ENCODE measurements at regions of chr1 and their contacts with region 1.

Region 1: DNA sequence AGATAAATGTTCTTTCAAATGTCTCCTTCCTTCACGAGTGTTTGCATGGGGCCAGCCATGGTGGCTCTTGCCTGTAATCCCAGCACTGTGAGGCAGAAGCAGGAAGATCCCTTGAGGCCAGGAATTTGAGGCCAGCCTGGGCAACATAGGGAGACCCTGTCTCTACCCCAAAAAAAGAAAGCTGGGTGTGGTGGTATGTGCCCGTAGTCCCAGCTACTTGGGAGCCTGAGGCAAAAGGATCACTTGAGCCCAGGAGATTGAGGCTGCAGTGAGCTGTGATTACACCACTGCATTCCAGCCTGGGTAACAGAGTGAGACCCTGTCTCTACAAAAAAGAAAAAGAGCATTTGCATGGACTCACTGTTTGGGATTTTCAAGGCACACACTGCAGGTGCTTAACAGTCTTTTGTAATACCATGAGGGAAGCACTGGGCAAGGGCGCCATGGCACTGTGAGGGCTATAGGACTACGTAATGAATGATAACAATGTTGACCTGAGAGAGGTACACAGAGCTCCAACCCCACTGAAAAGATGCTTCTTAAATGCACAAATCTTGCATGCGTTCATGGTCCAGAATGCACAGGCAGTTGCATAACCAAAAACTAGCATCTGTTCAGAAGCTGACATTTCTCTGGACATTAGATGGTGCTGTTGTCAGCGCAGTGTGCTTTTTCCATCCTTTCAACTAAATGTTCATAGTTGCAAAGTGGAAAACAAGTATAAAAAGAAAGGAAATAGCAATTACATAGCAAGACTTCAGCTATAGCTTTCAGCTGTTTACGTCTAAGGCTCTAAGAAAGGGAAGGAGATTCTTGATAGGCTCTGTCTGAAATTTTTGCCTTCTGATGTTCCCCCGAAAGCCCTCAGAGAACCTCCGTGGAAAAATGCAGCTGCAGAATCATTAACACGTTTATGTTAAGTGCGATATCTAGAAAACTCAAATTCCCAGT is 7.8 kb upstream of the TARBP1 start:
- DNase-seq: no peak
- H3K4me3 Mint-ChIP-seq: peak overlapping the region; percentile 28
- H3K27ac Mint-ChIP-seq: peak overlapping the region; percentile 94
- H3K4me1 Mint-ChIP-seq: peaks cover 42% of the 10 kb centered on the region
- H3K27me3 Mint-ChIP-seq: peaks cover 16% of the 10 kb centered on the region

Region 2: DNA sequence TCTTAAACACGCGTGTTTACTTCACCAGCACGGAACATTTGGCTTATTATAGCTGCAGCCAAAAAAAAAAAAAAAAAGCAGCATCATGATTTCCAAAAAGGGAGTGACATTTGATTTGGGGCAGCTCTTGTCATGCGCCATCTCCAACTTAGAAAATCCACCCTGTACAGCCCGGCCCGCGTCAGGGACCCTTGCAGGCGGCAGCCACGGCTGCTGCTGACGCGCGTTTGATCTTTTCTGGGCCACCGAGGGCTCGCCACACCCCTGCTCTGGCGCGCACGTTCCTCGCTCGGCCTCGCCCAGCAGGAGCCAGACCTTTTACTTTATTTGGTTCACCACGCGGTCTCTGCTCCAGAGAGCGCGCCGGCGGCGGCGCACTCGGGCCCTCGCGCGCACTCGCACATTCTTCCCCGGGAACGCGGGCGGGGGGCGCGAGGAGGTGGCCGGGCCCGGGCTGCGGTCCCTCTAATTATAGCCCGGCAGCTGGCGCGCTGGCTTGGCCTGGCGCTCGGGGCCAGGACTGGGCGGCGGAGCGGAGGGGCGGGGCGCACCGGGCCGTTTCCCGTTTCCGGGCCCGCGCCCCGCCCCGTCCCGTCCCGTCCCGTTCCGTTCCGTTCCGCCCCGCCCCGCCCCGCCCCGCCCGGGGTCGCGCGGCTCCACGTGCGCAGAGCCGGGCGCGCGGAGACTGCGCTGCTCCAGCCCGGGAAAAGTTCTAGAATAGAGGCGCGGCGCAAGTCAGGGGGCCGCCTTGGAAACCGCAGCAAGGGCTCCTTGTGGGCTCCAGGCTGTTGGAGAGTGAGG is 113.0 kb after region 1 on chr1:
- intact Hi-C with region 1: loop called (anchors 2 kb)
- DNase-seq: peak; percentile 70
- H3K4me3 Mint-ChIP-seq: peak overlapping the region; percentile 82
- H3K27ac Mint-ChIP-seq: peak overlapping the region; percentile 92
- H3K4me1 Mint-ChIP-seq: peaks cover 53% of the 10 kb centered on the region
- H3K27me3 Mint-ChIP-seq: no peaks in the 10 kb centered on the region

Region 3: GRCh38 chr1:234978397-234979295 is 491.9 kb after region 1 on chr1:
- intact Hi-C with region 1: loop called (anchors 5 kb)
- DNase-seq: no peak
- H3K4me3 Mint-ChIP-seq: peak overlapping the region; percentile 91
- H3K27ac Mint-ChIP-seq: peak overlapping the region; percentile 97
- H3K4me1 Mint-ChIP-seq: peaks cover 82% of the 10 kb centered on the region
- H3K27me3 Mint-ChIP-seq: no peaks in the 10 kb centered on the region

Region 4: DNA sequence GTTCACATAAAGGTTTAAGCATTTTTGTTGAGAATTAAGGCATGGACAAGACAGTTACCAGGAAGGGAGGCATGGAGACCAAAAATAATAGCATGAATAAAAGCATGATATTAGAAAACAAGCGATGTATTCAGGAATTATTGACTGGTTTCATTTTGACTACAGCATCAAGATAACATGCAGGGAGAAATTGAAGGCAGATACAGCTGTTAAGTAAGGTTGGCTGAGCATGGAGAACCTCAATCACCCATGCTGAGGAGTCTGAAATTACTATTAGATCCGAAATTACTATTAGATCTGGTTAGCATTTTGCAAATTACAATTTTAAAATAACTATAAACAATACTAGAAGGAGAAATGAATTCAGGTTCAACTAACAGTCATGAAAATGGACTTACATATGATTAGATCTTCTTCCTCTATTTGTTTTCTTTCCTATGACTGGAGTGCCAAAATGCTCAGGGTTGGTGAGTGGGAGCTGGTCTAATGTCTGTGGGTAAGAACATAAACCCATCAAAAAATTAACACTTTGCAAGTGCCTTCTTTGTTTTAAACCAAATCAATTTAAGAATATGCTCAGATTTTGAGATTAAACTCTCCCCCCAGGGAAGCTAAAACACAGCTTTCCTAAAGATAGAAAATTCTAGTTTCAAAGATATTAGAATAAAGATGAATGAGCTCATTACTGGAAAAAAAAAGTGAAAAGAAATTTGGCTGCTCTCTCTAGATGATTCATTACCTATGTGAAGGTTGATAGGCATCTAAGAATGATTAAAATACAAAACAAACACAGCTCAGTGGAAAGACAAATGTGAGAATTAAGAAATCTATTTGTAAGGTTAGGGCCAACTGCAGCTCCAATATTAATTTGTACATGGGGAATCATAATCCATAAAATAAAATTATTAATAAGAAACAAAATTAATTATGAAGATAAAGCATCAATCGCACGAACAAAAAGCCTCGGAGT is 759.5 kb after region 1 on chr1:
- intact Hi-C with region 1: loop called (anchors 10 kb)
- DNase-seq: no peak
- H3K4me3 Mint-ChIP-seq: peak overlapping the region; percentile 62
- H3K27ac Mint-ChIP-seq: peak overlapping the region; percentile 80
- H3K4me1 Mint-ChIP-seq: peaks cover 50% of the 10 kb centered on the region
- H3K27me3 Mint-ChIP-seq: no peaks in the 10 kb centered on the region

Region 5: GRCh38 chr1:235504496-235505222 is 1017.9 kb after region 1 on chr1:
- intact Hi-C with region 1: loop called (anchors 5 kb)
- DNase-seq: peak; percentile 98
- H3K4me3 Mint-ChIP-seq: peak overlapping the region; percentile 94
- H3K27ac Mint-ChIP-seq: peak overlapping the region; percentile 92
- H3K4me1 Mint-ChIP-seq: peaks cover 32% of the 10 kb centered on the region
- H3K27me3 Mint-ChIP-seq: peaks cover 6% of the 10 kb centered on the region

Measured in activated T-helper 2 cell treated with anti-CD3 and anti-CD28 coated beads, Interferon-gamma antibody, Interleukin-2, Interleukin-4, amounts not matched to agents 10 μg/mL and 5 μg/mL and 100 μg/mL, durations not matched to agents 14 hours and 24 hours and 36 hours (primary cell).